Activated T-helper 1 cell treated with anti-CD3 and anti-CD28 coated beads, Interleukin-12 subunit alpha, Interleukin-12 subunit beta, Interleukin-2, Interleukin-4 antibody, amounts not matched to agents 30 ng/mL and 10 ng/mL and 1 ng/mL, durations not matched to agents 14 hours and 24 hours and 36 hours (primary cell): ENCODE measurements at regions of chr1 and their contacts with region 1.

Region 1: DNA sequence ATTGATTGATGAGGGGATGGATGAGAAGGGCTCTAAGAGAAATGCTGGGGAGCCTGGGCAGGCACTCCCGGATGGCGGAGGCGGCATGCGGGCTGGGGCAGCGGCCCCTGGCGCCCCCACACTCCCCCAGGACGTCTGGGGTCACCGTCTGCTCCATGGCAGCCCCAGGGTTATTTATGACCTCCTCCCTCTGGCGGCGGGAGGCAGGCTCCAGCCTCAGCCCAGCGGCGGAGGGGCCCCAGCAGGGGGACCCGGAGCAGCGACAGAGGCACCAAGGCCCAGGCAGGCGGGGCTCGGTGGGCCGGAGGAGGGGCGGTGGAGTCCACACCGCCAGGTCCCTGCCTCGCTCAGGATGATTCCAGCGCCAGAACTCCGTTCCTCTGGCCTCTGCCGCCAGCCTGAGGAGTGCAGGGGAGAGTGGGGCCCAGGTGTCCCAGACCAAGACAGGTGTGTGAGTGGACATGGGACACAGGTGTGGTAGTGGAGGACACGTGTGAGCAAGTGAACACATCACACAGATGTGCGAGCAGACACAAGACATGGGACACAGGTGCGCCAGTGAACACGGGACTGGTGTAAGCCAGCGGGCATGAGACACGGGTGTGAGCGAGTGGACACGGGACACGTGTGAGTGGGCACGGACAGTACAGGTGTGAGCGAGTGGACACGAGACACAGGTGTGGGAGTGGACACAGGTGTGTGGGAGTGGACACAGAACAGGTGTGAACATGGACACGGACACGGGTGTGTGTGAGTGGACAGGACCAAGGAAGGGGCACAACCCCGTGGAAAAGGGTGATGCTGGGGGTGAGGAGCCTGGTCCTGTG is 2.5 kb upstream of the SAMD11 start:
- DNase-seq: no peak
- H3K4me3 Mint-ChIP-seq: no peak overlapping the region
- H3K27ac Mint-ChIP-seq: no peak overlapping the region
- H3K4me1 Mint-ChIP-seq: peaks cover 6% of the 10 kb centered on the region
- H3K27me3 Mint-ChIP-seq: peaks cover 39% of the 10 kb centered on the region

Region 2: DNA sequence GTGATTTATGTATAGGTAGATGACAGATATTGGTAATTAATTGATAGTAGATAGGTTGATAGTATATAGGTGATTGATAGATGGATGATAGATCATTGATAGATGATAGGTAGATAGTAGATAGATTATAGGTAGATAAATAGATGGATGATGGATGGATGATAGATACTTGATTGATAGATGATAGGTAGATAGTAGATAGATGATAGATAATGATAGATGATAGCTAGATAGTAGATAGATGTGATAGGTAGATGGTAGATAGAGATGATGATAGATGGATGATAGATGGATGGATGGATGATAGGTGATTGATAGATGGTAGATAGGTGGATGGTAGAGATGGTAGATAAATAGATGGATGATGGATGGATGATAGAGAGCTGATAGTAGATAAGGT is 59.5 kb before region 1 on chr1:
- intact Hi-C with region 1: no loop called
- DNase-seq: no peak
- H3K4me3 Mint-ChIP-seq: no peak overlapping the region
- H3K27ac Mint-ChIP-seq: no peak overlapping the region
- H3K4me1 Mint-ChIP-seq: peaks cover 10% of the 10 kb centered on the region
- H3K27me3 Mint-ChIP-seq: peaks cover 23% of the 10 kb centered on the region

Region 3: DNA sequence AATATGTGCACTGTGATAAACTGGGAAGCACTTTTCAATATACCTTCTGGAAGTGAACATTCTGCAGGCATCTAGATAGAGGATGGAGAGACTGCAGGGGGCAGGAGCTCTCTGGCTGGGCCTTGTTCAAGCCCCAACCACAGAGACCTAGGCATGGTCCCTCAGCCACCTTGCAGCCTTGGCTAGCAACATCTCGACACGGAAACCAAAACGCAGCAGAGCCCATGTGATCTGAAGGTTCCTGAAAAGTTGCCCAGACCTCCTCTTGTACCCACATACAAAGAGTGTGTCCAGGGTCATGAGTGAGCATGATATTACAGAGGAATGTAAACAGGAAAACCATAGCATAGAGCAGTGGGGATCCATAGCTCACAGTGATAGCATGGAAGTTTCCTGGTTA is 30.6 kb before region 1 on chr1:
- intact Hi-C with region 1: no loop called
- DNase-seq: no peak
- H3K4me3 Mint-ChIP-seq: no peak overlapping the region
- H3K27ac Mint-ChIP-seq: no peak overlapping the region
- H3K4me1 Mint-ChIP-seq: peaks cover 8% of the 10 kb centered on the region
- H3K27me3 Mint-ChIP-seq: peaks cover 46% of the 10 kb centered on the region

Region 4: DNA sequence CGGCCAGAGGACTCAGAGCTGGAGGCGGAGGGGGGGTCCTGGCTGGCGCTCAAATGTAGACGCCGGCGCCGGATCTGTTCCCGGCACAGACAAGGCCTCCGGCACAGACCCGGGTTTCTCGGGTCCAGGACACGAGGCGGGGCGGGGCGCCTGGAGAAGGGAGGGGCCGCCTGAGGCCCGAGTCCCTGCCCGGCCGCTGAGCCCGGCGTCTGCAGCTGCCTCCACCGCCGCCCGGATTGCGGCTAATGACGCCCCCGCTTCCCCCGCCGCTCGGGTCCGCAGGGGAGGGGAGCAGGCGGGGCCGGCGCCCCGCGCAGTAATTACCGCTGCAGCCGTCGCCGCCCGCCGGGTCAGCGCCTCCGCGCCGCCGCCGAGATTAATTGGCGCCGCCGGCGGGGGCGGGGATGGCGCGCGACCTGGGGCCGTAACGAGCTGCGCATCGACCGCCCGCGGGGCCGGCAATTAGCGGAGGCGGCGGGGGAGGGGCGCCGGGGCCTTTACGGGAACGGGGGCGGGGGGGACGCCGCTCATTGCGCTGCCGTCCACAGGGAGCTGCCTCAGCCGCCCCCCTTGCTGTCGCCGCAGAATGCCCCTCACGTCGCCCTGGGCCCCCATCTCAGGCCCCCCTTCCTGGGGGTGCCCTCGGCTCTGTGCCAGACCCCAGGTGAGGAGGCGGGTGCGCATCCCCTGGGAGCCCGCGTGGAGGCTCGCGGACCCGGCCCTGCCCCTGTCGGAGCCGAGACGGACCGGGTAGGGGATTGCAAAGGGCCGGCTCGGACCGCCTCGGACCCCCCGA is 20.6 kb after region 1 on chr1:
- intact Hi-C with region 1: loop called (anchors 2 kb)
- DNase-seq: no peak
- H3K4me3 Mint-ChIP-seq: no peak overlapping the region
- H3K27ac Mint-ChIP-seq: no peak overlapping the region
- H3K4me1 Mint-ChIP-seq: peaks cover 4% of the 10 kb centered on the region
- H3K27me3 Mint-ChIP-seq: peaks cover 30% of the 10 kb centered on the region

Region 5: DNA sequence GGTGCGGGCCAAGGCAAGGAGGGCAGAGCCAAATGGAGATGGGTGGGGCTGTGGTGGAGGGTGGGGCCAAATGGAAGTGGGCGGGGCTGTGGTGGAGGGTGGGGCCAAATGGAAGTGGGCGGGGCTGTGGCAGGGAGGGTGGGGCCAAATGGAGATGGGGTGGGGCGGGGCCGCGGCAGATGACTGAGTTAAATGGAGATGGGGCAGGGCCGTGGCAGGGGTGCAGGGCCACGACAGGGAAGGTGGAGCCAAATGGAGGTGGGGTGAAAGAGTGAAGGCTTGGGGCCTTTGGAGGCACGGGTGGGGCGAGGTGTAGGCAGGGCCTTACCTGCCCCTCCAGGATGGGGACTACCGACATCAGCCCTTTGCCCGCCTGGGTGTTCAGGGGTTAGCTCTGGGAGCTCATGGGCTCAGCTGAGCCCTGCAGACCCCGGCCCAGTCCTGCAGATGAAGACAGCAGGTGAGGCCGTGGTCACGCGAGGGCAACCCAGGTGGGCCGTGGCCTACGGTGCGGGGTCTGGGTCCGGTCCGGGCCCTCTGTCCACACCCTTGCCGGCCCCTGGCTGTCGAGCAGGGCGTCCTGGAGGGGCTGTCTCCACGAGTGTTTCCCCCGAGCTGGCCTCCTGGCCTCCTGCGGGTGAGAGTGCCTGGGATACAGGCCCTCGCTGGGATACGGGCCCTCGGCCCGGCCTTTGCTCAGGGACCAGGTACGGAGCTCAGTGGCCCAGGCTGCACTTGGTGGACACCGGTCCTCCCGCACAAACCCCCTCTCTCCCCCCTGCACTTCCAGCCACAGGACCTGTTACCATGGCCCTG is 170.6 kb after region 1 on chr1:
- intact Hi-C with region 1: loop called (anchors 10 kb)
- DNase-seq: no peak
- H3K4me3 Mint-ChIP-seq: no peak overlapping the region
- H3K27ac Mint-ChIP-seq: no peak overlapping the region
- H3K4me1 Mint-ChIP-seq: peaks cover 4% of the 10 kb centered on the region
- H3K27me3 Mint-ChIP-seq: no peaks in the 10 kb centered on the region

Region 6: GRCh38 chr1:1832820-1833219 is 911.6 kb after region 1 on chr1:
- intact Hi-C with region 1: no loop called
- DNase-seq: no peak
- H3K4me3 Mint-ChIP-seq: no peak overlapping the region
- H3K27ac Mint-ChIP-seq: peak overlapping the region; percentile 44
- H3K4me1 Mint-ChIP-seq: peaks cover 9% of the 10 kb centered on the region
- H3K27me3 Mint-ChIP-seq: no peaks in the 10 kb centered on the region